IMR-90 (cell line): ENCODE measurements at regions of chr19 and their contacts with region 1.

Region 1: DNA sequence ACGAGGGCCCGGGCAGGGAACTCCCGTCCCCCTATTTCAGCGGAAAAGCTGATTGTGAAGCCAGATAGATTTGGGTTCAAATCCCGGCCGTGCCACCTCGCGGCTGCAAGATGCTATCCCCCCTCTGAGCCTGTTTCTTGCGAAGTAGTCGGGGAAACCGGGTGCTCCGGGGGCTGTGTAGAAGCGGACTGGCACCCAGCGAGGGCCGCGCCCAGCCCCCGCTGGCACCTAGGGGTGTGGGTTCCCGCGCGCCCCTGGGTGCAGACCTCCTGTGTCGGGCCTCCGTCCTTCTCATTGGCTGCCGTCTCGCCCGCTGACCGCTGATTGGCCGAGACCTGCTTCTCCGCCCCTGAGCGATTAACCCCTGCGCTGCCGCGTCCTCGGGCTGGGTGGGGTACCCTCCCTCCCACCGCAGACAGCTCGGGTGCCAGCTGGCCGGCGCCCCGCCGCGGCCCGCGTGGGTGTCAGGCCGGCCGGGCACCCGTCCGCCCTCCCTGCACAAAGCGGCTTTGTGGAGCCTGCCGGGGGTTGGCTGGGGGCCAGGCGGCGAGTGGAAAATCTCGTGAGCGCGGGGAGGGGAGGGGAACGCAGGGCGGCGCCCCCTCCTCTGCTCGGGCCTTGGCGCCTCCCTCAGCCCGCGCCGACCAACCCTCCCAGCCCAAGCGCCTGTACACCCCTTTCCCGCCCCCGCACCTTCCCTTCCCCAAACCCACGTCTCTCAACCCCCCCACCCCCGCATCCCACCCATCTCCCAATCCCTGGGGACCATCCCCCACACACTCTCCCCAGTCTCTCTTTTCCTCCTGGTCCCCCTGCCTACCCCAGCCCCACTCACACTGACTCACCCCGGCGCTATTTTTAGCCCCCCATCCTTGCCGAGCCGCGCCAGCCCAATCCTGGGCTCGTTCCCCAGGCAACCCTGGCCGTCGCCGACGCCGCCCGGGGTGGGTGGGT is 11.4 kb downstream of the CIC start:
- DNase-seq: peak; percentile 83
- ATAC-seq: peak; percentile 47
- H3K4me3 ChIP-seq: peak overlapping the region; percentile 65
- H3K27ac ChIP-seq: peak overlapping the region; percentile 93
- H3K4me1 ChIP-seq: peaks cover 51% of the 10 kb centered on the region
- H3K27me3 ChIP-seq: no peaks in the 10 kb centered on the region
- CTCF ChIP-seq: no peak
- POLR2A ChIP-seq: 0 out of 2 replicates have a peak, but pooled peaks have one; percentile 24
- RAD21 ChIP-seq: no peak

Region 2: DNA sequence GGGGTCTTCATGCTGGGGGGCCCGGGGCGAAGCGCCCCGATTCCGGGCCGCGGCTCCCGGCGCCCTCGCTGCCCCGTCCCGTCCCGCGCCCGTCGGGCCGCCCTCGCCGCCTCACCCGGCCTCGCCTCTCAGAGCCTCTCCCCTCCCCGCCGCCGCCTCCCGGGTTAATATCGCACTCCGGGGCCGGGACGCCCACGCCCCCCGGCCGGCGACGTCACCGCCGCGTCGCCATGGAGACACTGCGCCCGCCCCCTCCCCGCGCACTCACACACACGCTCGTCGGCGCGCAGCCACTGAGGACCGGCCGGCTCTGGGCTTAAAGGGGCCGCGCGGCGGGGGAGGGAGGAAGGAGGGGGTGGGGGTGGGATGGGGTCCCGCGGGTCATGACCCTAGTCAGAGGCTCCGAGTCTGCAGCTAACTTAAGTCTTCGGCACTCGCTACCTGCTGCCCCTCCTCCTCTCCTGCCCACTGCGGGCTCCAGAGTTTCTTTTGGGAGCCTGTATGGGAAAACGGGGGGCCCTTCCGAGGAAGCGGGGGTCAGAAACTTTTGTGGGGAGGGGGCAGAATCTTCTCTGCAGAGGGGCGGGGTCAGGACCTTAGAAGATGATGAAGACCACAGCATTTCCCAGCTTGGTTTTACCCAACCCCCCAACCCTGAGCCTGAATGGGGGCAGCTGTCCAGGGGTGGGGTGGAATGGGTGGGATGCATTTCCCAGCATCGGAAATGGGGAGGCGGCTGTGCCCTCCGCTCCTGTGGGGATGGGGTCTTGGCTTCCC is 25.3 kb before region 1 on chr19 and contains the start of gene ERF:
- CTCF ChIA-PET with region 1: interaction called, 3 read pairs
- POLR2A ChIA-PET with region 1: no interaction called
- dilution Hi-C with region 1: no loop called
- in situ Hi-C with region 1: no loop called
- intact Hi-C with region 1: loop called (anchors 2 kb)
- DNase-seq: peak; percentile 83
- ATAC-seq: peak; percentile 65
- H3K4me3 ChIP-seq: peak within 1 kb of the TSS; percentile 99
- H3K27ac ChIP-seq: peak within 1 kb of the TSS; percentile 100
- H3K4me1 ChIP-seq: peaks cover 19% of the 10 kb centered on the region
- H3K27me3 ChIP-seq: no peaks in the 10 kb centered on the region
- CTCF ChIP-seq: no peak
- POLR2A ChIP-seq: peak; percentile 95
- RAD21 ChIP-seq: no peak
- total RNA-seq, gene ERF: 5.2 and 6.1 TPM in 2 replicates

Region 3: GRCh38 chr19:42268704-42269477 is 11.6 kb before region 1 on chr19 and contains the start of gene CIC:
- CTCF ChIA-PET with region 1: interaction called, 12 read pairs
- POLR2A ChIA-PET with region 1: no interaction called
- dilution Hi-C with region 1: no loop called
- in situ Hi-C with region 1: no loop called
- intact Hi-C with region 1: no loop called
- DNase-seq: peak; percentile 100
- ATAC-seq: peak; percentile 88
- H3K4me3 ChIP-seq: peak within 1 kb of the TSS; percentile 71
- H3K27ac ChIP-seq: peak within 1 kb of the TSS; percentile 90
- H3K4me1 ChIP-seq: peaks cover 10% of the 10 kb centered on the region
- H3K27me3 ChIP-seq: no peaks in the 10 kb centered on the region
- CTCF ChIP-seq: 0 out of 2 replicates have a peak, but pooled peaks have one; percentile 0
- POLR2A ChIP-seq: no peak
- RAD21 ChIP-seq: no peak
- total RNA-seq, gene CIC: 1.8 and 2.5 TPM in 2 replicates